ENCODE measurements at regions of chr7 and their contacts with region 1.

Region 1: DNA sequence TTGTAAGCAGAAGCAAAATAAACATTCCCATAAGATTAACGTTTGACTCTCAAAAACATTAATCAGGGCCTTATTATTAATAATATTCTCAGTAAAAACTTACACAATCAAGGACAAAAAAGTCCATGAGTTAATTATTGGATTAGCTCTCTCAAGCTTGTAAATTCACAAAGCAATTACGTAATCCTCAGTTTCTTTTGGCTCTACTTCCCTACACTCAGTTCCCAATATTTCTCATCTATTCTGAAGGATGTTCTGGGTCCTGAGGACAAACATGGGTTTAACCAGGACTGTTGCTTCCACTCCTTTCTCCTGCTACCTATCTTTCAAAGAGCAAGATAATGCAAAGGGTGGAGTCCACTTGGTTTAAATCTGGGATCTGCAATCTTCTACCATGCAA is 15.1 kb downstream of the FBXL13 start:
- DNase-seq: no peak
- ATAC-seq: no peak
- H3K4me3 ChIP-seq: no peak overlapping the region
- H3K27ac ChIP-seq: no peak overlapping the region
- H3K4me1 ChIP-seq: peaks cover 5 to 11% of the 10 kb centered on the region in 2 experiments; a peak in 3 of 4 replicates
- H3K27me3 ChIP-seq: no peaks in the 10 kb centered on the region
- CTCF ChIP-seq: no peak
- POLR2A ChIP-seq: no peak
- RAD21 ChIP-seq: no peak

Region 2: GRCh38 chr7:102953406-102953805 is 106.1 kb before region 1 on chr7:
- CTCF ChIA-PET with region 1: no interaction called
- POLR2A ChIA-PET with region 1: no interaction called
- RAD21 ChIA-PET with region 1: interaction called in 1 of 2 experiments, 4 read pairs
- intact Hi-C with region 1: loop called (anchors 10 kb)
- DNase-seq: no peak
- ATAC-seq: no peak
- H3K4me3 ChIP-seq: no peak overlapping the region
- H3K27ac ChIP-seq: no peak overlapping the region
- H3K4me1 ChIP-seq: no peaks in the 10 kb centered on the region
- H3K27me3 ChIP-seq: no peaks in the 10 kb centered on the region
- CTCF ChIP-seq: no peak
- POLR2A ChIP-seq: no peak
- RAD21 ChIP-seq: no peak

Region 3: GRCh38 chr7:102966465-102966864 is 93.0 kb before region 1 on chr7:
- CTCF ChIA-PET with region 1: no interaction called
- POLR2A ChIA-PET with region 1: no interaction called
- RAD21 ChIA-PET with region 1: no interaction called
- intact Hi-C with region 1: no loop called
- DNase-seq: no peak
- ATAC-seq: no peak
- H3K4me3 ChIP-seq: no peak overlapping the region
- H3K27ac ChIP-seq: no peak overlapping the region
- H3K4me1 ChIP-seq: no peaks in the 10 kb centered on the region
- H3K27me3 ChIP-seq: no peaks in the 10 kb centered on the region
- CTCF ChIP-seq: no peak
- POLR2A ChIP-seq: no peak
- RAD21 ChIP-seq: no peak

Region 4: GRCh38 chr7:104791080-104791479 is 1731.6 kb after region 1 on chr7:
- CTCF ChIA-PET with region 1: no interaction called
- POLR2A ChIA-PET with region 1: no interaction called
- RAD21 ChIA-PET with region 1: no interaction called
- intact Hi-C with region 1: no loop called
- DNase-seq: no peak
- ATAC-seq: no peak
- H3K4me3 ChIP-seq: no peak overlapping the region
- H3K27ac ChIP-seq: no peak overlapping the region
- H3K4me1 ChIP-seq: no peaks in the 10 kb centered on the region
- H3K27me3 ChIP-seq: peaks cover 86% of the 10 kb centered on the region
- CTCF ChIP-seq: no peak
- POLR2A ChIP-seq: no peak
- RAD21 ChIP-seq: no peak